ENCODE measurements at regions of chr11 and their contacts with region 1.

Region 1: GRCh38 chr11:4187055-4187988 is 92.7 kb downstream of the RRM1 start:
- DNase-seq: peak; percentile 80 to 93 (median 86)
- H3K4me3 ChIP-seq: peak overlapping the region; percentile 34 to 79 (median 70)
- H3K27ac ChIP-seq: peak overlapping the region in 24 of 59 donors; percentile 11 to 80 (median 60)
- H3K27me3 ChIP-seq: no peaks in the 10 kb centered on the region
- CTCF ChIP-seq: peak; percentile 62 to 100 (median 98)

Region 2: GRCh38 chr11:4496557-4497275 is 309.4 kb after region 1 on chr11:
- intact Hi-C with region 1: loop called (anchors 2 to 5 kb)
- DNase-seq: no peak
- H3K4me3 ChIP-seq: no peak overlapping the region
- H3K27ac ChIP-seq: no peak overlapping the region
- H3K27me3 ChIP-seq: peaks cover 0 to 16% (median 0%) of the 10 kb centered on the region in 45 donors
- CTCF ChIP-seq: no peak

Region 3: DNA sequence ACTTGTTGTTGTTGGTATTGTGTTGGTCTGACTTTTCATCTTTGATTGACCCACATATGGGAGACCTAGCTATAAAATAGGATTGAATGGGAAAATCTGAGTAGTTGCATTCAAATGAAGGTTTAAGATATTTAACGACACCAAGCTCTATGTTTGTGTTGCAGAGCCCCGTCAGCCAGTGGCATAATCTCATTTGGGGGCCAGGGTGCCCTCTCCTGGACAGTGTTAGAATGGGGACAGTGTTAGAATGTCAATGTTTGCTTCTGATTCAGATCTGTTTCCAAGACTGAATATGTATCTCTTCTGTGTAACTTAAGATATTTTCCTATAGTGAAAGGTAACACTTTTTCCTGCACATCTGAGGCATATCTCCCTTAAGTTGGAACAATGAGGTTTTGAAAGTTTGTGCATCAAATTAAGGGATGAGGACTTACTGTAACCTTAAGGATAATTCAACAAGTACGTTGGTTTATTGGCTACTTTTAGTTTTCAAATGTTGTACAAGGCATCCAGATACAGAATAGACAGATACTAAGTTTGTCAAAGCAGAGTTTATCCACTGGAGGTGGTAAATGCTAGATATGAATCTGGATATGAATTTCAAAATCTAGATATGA is 352.4 kb after region 1 on chr11:
- intact Hi-C with region 1: loop called (anchors 5 kb)
- DNase-seq: peak in 7 of 10 donors; percentile 16 to 61 (median 44)
- H3K4me3 ChIP-seq: no peak overlapping the region
- H3K27ac ChIP-seq: no peak overlapping the region
- H3K27me3 ChIP-seq: peaks cover 0 to 6% (median 0%) of the 10 kb centered on the region in 45 donors
- CTCF ChIP-seq: peak in 55 of 56 donors; percentile 8 to 76 (median 54)